BJ (cell line): ENCODE measurements at regions of chr1 and their contacts with region 1.

Region 1: DNA sequence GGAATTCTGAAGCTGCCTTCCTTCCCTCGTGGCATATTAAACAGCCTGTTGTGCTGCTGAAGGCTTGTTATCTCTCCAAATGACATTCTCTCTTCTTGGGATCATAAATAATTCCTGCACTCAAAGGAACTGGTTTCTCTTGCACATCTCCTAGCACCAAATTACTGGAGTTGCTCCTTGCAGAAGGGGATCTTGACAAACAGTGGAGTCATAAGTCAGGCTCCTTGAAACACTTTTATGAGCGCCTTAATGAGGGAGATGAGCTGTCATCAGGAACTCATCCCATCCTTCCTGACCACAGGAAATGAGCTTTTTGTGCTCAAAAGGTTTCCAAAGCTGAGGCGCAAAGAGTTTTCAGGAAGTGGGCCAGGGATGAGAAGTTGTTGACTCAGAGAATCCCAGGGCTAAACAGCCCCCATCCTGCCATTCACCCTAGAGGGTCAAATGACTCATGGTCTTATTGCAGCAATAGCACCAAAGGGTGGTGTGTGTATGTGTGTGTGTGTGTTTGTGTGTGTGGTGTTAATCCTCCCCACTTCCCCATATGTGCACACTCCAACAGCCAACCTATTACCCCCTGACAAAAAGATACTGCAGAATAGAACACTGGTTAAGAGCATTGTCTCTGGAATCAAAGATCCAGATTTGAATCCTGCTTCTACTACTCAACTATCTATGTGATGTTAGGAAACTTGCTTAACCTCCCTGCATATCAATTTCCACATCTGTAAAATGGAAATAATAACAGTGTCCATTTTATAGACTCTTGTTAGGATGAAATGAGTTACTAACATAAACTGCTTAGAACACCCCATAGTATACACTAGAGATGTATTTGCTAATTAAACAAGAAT is 2.8 kb upstream of the PHC2 start:
- DNase-seq: peak; percentile 100
- H3K4me3 ChIP-seq: no peak overlapping the region
- H3K27me3 ChIP-seq: no peaks in the 10 kb centered on the region
- CTCF ChIP-seq: no peak

Region 2: GRCh38 chr1:33343539-33343938 is 90.2 kb before region 1 on chr1:
- CTCF ChIA-PET with region 1: no interaction called
- POLR2A ChIA-PET with region 1: interaction called, 16 read pairs
- DNase-seq: no peak
- H3K4me3 ChIP-seq: no peak overlapping the region
- H3K27me3 ChIP-seq: no peaks in the 10 kb centered on the region
- CTCF ChIP-seq: no peak

Region 3: DNA sequence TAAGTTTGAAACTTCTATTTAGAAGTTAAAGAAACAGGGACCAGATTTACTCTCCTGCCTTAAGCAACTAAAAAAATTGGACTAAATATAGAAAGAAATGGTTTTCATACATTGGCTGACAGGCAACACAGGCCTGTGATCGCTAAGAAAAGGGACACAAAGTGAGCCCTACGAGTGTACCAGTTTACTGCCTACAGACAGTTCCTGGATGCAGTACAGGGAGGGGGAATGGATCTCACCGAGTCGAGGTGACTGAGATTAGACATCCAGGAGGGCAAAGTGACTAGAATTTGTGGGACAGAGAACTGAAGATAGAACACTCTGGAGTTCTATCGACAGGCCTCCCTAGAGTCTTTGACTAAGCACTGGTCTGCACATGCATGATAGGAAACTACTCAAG is 18.9 kb before region 1 on chr1:
- CTCF ChIA-PET with region 1: no interaction called
- POLR2A ChIA-PET with region 1: no interaction called
- DNase-seq: no peak
- H3K4me3 ChIP-seq: no peak overlapping the region
- H3K27me3 ChIP-seq: no peaks in the 10 kb centered on the region
- CTCF ChIP-seq: no peak

Region 4: GRCh38 chr1:34852677-34853217 is 1419.0 kb after region 1 on chr1:
- CTCF ChIA-PET with region 1: no interaction called
- POLR2A ChIA-PET with region 1: no interaction called
- DNase-seq: peak; percentile 70
- H3K4me3 ChIP-seq: no peak overlapping the region
- H3K27me3 ChIP-seq: no peaks in the 10 kb centered on the region
- CTCF ChIP-seq: peak; percentile 93